H1 (cell line): ENCODE measurements at regions of chr1 and their contacts with region 1.

Region 1: GRCh38 chr1:55337801-55338447 is 122.8 kb upstream of the USP24 start:
- DNase-seq: peak in 1 of 2 experiments; percentile 7
- H3K4me3 ChIP-seq: no peak overlapping the region
- H3K27ac ChIP-seq: no peak overlapping the region
- H3K4me1 ChIP-seq: no peaks in the 10 kb centered on the region; a peak in 1 of 7 replicates
- H3K27me3 ChIP-seq: no peaks in the 10 kb centered on the region
- CTCF ChIP-seq: peak in 2 of 3 experiments; percentile 68 to 78; a peak in 3 of 4 replicates
- EP300 ChIP-seq: no peak
- POLR2A ChIP-seq: no peak
- RAD21 ChIP-seq: peak; percentile 83 to 88

Region 2: GRCh38 chr1:55284852-55285251 is 53.1 kb before region 1 on chr1:
- CTCF ChIA-PET with region 1: interaction called, 33 read pairs
- POLR2A ChIA-PET with region 1: no interaction called
- DNase-seq: no peak
- H3K4me3 ChIP-seq: no peak overlapping the region
- H3K27ac ChIP-seq: no peak overlapping the region
- H3K4me1 ChIP-seq: no peaks in the 10 kb centered on the region
- H3K27me3 ChIP-seq: no peaks in the 10 kb centered on the region
- CTCF ChIP-seq: peak in 2 of 3 experiments; percentile 46 to 55; a peak in 2 of 4 replicates
- EP300 ChIP-seq: no peak
- POLR2A ChIP-seq: no peak
- RAD21 ChIP-seq: peak; percentile 78 to 79

Region 3: DNA sequence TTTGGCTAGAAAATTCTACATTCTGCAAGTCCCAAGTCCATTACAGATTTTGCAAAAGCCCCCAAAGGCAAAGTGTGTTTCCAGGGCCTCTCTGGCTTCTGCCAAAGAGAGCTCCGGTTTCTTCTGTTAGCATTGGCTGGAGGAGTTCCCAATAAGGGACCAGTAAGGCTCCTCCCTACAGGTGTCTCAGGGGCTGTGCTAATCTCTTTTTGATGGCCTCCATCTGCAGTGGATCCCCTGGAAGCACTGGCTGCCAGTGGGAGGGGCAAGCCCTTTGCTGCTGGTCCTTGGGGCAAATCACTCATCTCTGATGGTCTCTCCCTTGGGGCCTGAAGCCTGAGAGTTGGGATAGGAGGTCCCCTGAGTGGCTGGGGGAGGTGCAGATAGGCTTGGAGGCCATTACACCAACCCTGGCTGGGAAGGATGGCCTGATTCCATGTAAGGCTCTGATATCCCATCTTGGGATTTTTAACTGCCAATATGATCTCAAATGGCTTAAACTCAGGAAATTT is 33.6 kb before region 1 on chr1:
- CTCF ChIA-PET with region 1: interaction called, 13 read pairs
- POLR2A ChIA-PET with region 1: no interaction called
- DNase-seq: no peak
- H3K4me3 ChIP-seq: no peak overlapping the region
- H3K27ac ChIP-seq: no peak overlapping the region
- H3K4me1 ChIP-seq: no peaks in the 10 kb centered on the region; a peak in 1 of 7 replicates
- H3K27me3 ChIP-seq: no peaks in the 10 kb centered on the region
- CTCF ChIP-seq: no peak
- EP300 ChIP-seq: no peak
- POLR2A ChIP-seq: no peak
- RAD21 ChIP-seq: no peak

Region 4: DNA sequence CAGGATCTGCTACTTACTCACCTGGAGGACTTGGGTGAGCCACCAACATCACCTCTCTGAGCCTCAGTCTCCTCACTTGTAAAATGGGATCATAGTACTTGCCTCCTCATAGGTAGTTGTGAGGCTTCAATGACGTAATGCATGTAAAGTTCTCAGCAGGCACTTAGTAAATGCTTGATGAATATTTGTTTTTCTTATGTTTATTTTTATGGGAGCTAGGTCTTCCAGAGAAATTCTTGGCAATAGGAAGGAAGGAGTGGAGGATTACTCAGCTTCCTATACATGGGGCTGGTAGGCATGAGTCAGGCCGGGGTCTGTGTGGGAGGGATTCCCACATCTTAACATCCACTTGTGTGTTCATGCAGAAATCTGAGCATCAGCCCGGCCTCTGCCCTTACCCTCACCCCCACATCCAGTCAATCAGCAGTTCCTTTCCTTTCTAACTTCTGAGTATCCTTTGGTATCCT is 27.4 kb before region 1 on chr1:
- CTCF ChIA-PET with region 1: interaction called, 12 read pairs
- POLR2A ChIA-PET with region 1: no interaction called
- DNase-seq: no peak
- H3K4me3 ChIP-seq: no peak overlapping the region
- H3K27ac ChIP-seq: no peak overlapping the region
- H3K4me1 ChIP-seq: no peaks in the 10 kb centered on the region
- H3K27me3 ChIP-seq: no peaks in the 10 kb centered on the region
- CTCF ChIP-seq: no peak
- EP300 ChIP-seq: no peak
- POLR2A ChIP-seq: no peak
- RAD21 ChIP-seq: no peak

Region 5: GRCh38 chr1:55318116-55318817 is 19.7 kb before region 1 on chr1:
- CTCF ChIA-PET with region 1: interaction called, 12 read pairs
- POLR2A ChIA-PET with region 1: no interaction called
- DNase-seq: no peak
- H3K4me3 ChIP-seq: no peak overlapping the region
- H3K27ac ChIP-seq: no peak overlapping the region
- H3K4me1 ChIP-seq: peaks cover 0 to under 1% (median 0%) of the 10 kb centered on the region in 4 experiments; a peak in 2 of 7 replicates
- H3K27me3 ChIP-seq: peaks cover 0 to 3% (median 0%) of the 10 kb centered on the region in 4 experiments; a peak in 2 of 7 replicates
- CTCF ChIP-seq: no peak
- EP300 ChIP-seq: no peak
- POLR2A ChIP-seq: no peak
- RAD21 ChIP-seq: no peak